CD8-positive, alpha-beta T cell (primary cell): ENCODE measurements at regions of chr9 and their contacts with region 1.

Region 1: DNA sequence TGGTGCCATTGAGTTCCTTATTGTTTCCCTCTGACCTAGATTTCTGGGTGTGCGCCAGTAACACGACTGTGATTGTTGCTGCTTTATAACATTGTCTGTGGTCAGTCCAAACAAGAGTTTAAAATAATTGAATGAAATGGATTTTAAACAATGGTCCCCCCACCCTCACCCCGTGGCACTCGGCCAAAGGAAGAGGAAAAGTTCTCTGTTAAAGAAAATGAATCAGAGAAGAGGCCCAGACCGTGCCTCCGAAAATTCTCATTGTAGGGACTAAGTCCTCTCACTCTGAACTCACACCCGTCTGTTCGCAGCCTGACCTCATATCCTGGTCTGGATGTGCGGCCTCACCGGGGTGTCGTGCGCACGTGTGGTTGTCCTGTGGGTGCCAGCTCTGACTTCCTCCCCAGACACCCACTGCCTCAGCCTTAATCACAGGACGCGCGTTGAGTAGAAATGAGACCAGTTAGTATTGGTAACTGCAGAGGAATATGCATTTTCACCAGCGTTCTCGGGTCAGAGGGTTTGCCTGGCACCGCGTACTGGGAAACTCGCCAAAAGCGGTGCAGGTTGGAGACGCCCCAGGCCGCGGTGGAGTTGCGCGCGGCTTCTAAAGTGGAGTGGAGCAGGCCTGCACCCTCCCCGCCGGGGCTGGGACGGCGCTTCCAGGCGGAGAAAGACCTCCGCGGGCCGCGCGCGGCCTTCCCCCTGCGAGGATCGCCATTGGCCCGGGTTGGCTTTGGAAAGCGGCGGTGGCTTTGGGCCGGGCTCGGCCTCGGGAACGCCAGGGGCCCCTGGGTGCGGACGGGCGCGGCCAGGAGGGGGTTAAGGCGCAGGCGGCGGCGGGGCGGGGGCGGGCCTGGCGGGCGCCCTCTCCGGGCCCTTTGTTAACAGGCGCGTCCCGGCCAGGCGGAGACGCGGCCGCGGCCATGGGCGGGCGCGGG is at the start of gene ABL1:
- DNase-seq: peak; percentile 42 to 91 (median 65)
- ATAC-seq: peak; percentile 86
- H3K4me3 ChIP-seq: peak within 1 kb of the TSS; percentile 65
- H3K4me3 Mint-ChIP-seq: peak within 1 kb of the TSS; percentile 97
- H3K27ac ChIP-seq: peak within 1 kb of the TSS; percentile 44 to 58
- H3K27ac Mint-ChIP-seq: peak within 1 kb of the TSS; percentile 92
- H3K4me1 ChIP-seq: peaks cover 14% of the 10 kb centered on the region
- H3K4me1 Mint-ChIP-seq: peaks cover 47% of the 10 kb centered on the region
- H3K27me3 ChIP-seq: no peaks in the 10 kb centered on the region
- H3K27me3 Mint-ChIP-seq: no peaks in the 10 kb centered on the region
- CTCF ChIP-seq: no peak
- total RNA-seq, gene ABL1: 37.5 to 38.0 TPM

Region 2: GRCh38 chr9:130542457-130543228 is 292.0 kb before region 1 on chr9:
- CTCF ChIA-PET with region 1: no interaction called
- POLR2A ChIA-PET with region 1: interaction called, 10 read pairs
- intact Hi-C with region 1: no loop called
- DNase-seq: no peak
- ATAC-seq: no peak
- H3K4me3 ChIP-seq: no peak overlapping the region
- H3K4me3 Mint-ChIP-seq: no peak overlapping the region
- H3K27ac ChIP-seq: no peak overlapping the region
- H3K27ac Mint-ChIP-seq: no peak overlapping the region
- H3K4me1 ChIP-seq: peaks cover 1% of the 10 kb centered on the region
- H3K4me1 Mint-ChIP-seq: peaks cover 2% of the 10 kb centered on the region
- H3K27me3 ChIP-seq: peaks cover 0 to 6% of the 10 kb centered on the region in 2 experiments
- H3K27me3 Mint-ChIP-seq: peaks cover 30% of the 10 kb centered on the region
- CTCF ChIP-seq: no peak

Region 3: GRCh38 chr9:130712564-130713285 is 121.9 kb before region 1 on chr9:
- CTCF ChIA-PET with region 1: no interaction called
- POLR2A ChIA-PET with region 1: no interaction called
- intact Hi-C with region 1: loop called in 1 of 2 experiments (anchors 10 kb)
- DNase-seq: peak; percentile 87 to 97 (median 95)
- ATAC-seq: peak; percentile 96
- H3K4me3 ChIP-seq: peak overlapping the region; percentile 81 to 92
- H3K4me3 Mint-ChIP-seq: peak overlapping the region; percentile 92
- H3K27ac ChIP-seq: peak overlapping the region; percentile 87 to 97
- H3K27ac Mint-ChIP-seq: peak overlapping the region; percentile 94
- H3K4me1 ChIP-seq: peaks cover 31% of the 10 kb centered on the region
- H3K4me1 Mint-ChIP-seq: peaks cover 36% of the 10 kb centered on the region
- H3K27me3 ChIP-seq: no peaks in the 10 kb centered on the region
- H3K27me3 Mint-ChIP-seq: no peaks in the 10 kb centered on the region
- CTCF ChIP-seq: no peak

Region 4: GRCh38 chr9:130768265-130768664 is 66.4 kb before region 1 on chr9:
- CTCF ChIA-PET with region 1: no interaction called
- POLR2A ChIA-PET with region 1: no interaction called
- intact Hi-C with region 1: no loop called
- DNase-seq: no peak
- ATAC-seq: no peak
- H3K4me3 ChIP-seq: no peak overlapping the region
- H3K4me3 Mint-ChIP-seq: no peak overlapping the region
- H3K27ac ChIP-seq: no peak overlapping the region
- H3K27ac Mint-ChIP-seq: no peak overlapping the region
- H3K4me1 ChIP-seq: peaks cover 3% of the 10 kb centered on the region
- H3K4me1 Mint-ChIP-seq: peaks cover 54% of the 10 kb centered on the region
- H3K27me3 ChIP-seq: no peaks in the 10 kb centered on the region
- H3K27me3 Mint-ChIP-seq: no peaks in the 10 kb centered on the region
- CTCF ChIP-seq: no peak

Region 5: GRCh38 chr9:130780865-130781504 is 53.7 kb before region 1 on chr9:
- CTCF ChIA-PET with region 1: no interaction called
- POLR2A ChIA-PET with region 1: no interaction called
- intact Hi-C with region 1: no loop called
- DNase-seq: no peak
- ATAC-seq: no peak
- H3K4me3 ChIP-seq: no peak overlapping the region
- H3K4me3 Mint-ChIP-seq: no peak overlapping the region
- H3K27ac ChIP-seq: no peak overlapping the region
- H3K27ac Mint-ChIP-seq: no peak overlapping the region
- H3K4me1 ChIP-seq: no peaks in the 10 kb centered on the region
- H3K4me1 Mint-ChIP-seq: peaks cover 19% of the 10 kb centered on the region
- H3K27me3 ChIP-seq: no peaks in the 10 kb centered on the region
- H3K27me3 Mint-ChIP-seq: no peaks in the 10 kb centered on the region
- CTCF ChIP-seq: no peak

Region 6: GRCh38 chr9:130805510-130806326 is 28.9 kb before region 1 on chr9:
- CTCF ChIA-PET with region 1: no interaction called
- POLR2A ChIA-PET with region 1: no interaction called
- intact Hi-C with region 1: no loop called
- DNase-seq: no peak
- ATAC-seq: no peak
- H3K4me3 ChIP-seq: no peak overlapping the region
- H3K4me3 Mint-ChIP-seq: no peak overlapping the region
- H3K27ac ChIP-seq: no peak overlapping the region
- H3K27ac Mint-ChIP-seq: peak overlapping the region; percentile 49
- H3K4me1 ChIP-seq: no peaks in the 10 kb centered on the region
- H3K4me1 Mint-ChIP-seq: peaks cover 12% of the 10 kb centered on the region
- H3K27me3 ChIP-seq: no peaks in the 10 kb centered on the region
- H3K27me3 Mint-ChIP-seq: no peaks in the 10 kb centered on the region
- CTCF ChIP-seq: no peak